Activated naive CD4-positive, alpha-beta T cell treated with anti-CD3 and anti-CD28 coated beads for 36 hours (primary cell): ENCODE measurements at regions of chr10 and their contacts with region 1.

Region 1: GRCh38 chr10:71899665-71900412 is 48.8 kb upstream of the PSAP start:
- DNase-seq: no peak
- H3K4me3 Mint-ChIP-seq: no peak overlapping the region
- H3K27ac Mint-ChIP-seq: no peak overlapping the region
- H3K4me1 Mint-ChIP-seq: peaks cover 11% of the 10 kb centered on the region
- H3K27me3 Mint-ChIP-seq: no peaks in the 10 kb centered on the region

Region 2: DNA sequence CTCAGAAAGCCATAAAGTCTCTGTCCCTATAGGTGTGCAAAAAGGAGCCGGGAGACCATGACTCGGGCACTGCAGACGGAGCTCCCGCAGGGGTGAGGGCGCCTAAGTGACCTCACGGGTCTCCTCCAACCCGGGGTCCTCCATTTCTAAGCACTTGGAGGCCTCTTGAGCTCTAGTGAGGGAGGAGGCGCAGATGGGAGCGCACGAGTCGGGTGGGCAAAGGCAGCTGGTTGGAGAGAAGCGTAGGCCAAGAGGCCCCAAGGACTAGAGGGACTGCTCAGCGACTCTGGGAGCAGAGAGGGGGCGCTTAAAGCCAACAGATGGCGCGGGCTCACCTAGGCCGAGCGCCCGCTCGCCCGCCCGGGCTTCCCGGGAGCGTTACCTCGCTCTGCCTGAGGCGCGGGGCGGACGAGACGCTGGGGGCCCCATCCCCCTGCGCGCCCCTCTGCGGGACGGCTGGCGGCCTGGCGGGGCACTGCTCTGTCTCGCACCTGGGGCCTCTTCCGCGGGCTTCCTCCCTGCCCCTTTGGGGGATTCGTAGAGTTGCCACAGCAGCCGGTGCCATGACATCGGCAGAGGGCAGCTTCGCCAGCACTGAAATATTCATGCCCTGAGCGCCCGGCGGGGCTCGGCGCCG is 503.6 kb before region 1 on chr10:
- CTCF ChIA-PET with region 1: no interaction called
- intact Hi-C with region 1: loop called (anchors 5 kb)
- DNase-seq: peak; percentile 62
- H3K4me3 Mint-ChIP-seq: peak overlapping the region; percentile 45
- H3K27ac Mint-ChIP-seq: no peak overlapping the region
- H3K4me1 Mint-ChIP-seq: peaks cover 2% of the 10 kb centered on the region
- H3K27me3 Mint-ChIP-seq: peaks cover 58% of the 10 kb centered on the region